IMR-90 (cell line): ENCODE measurements at regions of chr3 and their contacts with region 1.

Region 1: GRCh38 chr3:169863458-169863899 is 6.3 kb downstream of the LRRC31 start:
- DNase-seq: peak; percentile 72
- ATAC-seq: peak; percentile 95
- H3K4me3 ChIP-seq: no peak overlapping the region
- H3K27ac ChIP-seq: no peak overlapping the region
- H3K4me1 ChIP-seq: no peaks in the 10 kb centered on the region
- H3K27me3 ChIP-seq: peaks cover 4% of the 10 kb centered on the region; the same call in 1 of the 2 replicates
- CTCF ChIP-seq: peak; percentile 82
- POLR2A ChIP-seq: no peak
- RAD21 ChIP-seq: peak; percentile 85

Region 2: DNA sequence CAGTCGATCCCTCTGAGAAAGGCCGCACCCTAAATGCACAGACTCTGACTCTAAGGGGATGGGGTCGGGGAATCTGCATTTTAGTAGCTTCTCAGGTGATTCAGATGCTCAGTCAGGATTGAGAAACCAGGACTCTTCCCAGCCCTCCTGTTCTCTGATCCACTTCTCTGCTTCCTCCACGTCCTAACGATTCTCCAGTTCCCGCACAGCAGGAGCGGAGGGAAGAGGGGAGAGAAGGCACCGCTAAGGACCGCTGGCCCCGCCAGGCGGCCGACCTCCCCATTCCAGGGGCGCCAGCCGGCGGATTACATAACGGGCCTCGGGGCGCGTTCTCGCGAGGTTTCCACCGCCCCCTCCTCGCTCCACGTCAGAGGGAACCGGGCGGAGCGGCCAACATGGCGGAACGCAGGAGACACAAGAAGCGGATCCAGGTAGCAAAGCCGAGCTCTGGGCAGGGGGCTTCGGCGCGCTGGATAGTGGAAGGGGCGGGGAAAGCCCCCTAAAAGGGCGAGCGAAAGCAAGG is 103.0 kb after region 1 on chr3 and contains the start of gene SEC62:
- CTCF ChIA-PET with region 1: no interaction called
- POLR2A ChIA-PET with region 1: no interaction called
- dilution Hi-C with region 1: no loop called
- in situ Hi-C with region 1: no loop called
- intact Hi-C with region 1: loop called (anchors 5 kb)
- DNase-seq: peak; percentile 88
- ATAC-seq: peak; percentile 93
- H3K4me3 ChIP-seq: peak within 1 kb of the TSS; percentile 99
- H3K27ac ChIP-seq: peak within 1 kb of the TSS; percentile 89
- H3K4me1 ChIP-seq: peaks cover 2% of the 10 kb centered on the region; the same call in 1 of the 2 replicates
- H3K27me3 ChIP-seq: peaks cover 3% of the 10 kb centered on the region; the same call in 1 of the 2 replicates
- CTCF ChIP-seq: peak; percentile 49
- POLR2A ChIP-seq: peak; percentile 88
- RAD21 ChIP-seq: peak; percentile 43
- total RNA-seq, gene SEC62: 33.2 and 52.2 TPM in 2 replicates

Region 3: GRCh38 chr3:170055209-170055608 is 191.7 kb after region 1 on chr3:
- CTCF ChIA-PET with region 1: no interaction called
- POLR2A ChIA-PET with region 1: no interaction called
- dilution Hi-C with region 1: no loop called
- in situ Hi-C with region 1: loop called (anchors 10 kb)
- intact Hi-C with region 1: loop called (anchors 1 kb)
- DNase-seq: peak; percentile 51
- ATAC-seq: peak; percentile 24
- H3K4me3 ChIP-seq: no peak overlapping the region
- H3K27ac ChIP-seq: no peak overlapping the region
- H3K4me1 ChIP-seq: no peaks in the 10 kb centered on the region
- H3K27me3 ChIP-seq: no peaks in the 10 kb centered on the region
- CTCF ChIP-seq: no peak
- POLR2A ChIP-seq: no peak
- RAD21 ChIP-seq: no peak

Region 4: DNA sequence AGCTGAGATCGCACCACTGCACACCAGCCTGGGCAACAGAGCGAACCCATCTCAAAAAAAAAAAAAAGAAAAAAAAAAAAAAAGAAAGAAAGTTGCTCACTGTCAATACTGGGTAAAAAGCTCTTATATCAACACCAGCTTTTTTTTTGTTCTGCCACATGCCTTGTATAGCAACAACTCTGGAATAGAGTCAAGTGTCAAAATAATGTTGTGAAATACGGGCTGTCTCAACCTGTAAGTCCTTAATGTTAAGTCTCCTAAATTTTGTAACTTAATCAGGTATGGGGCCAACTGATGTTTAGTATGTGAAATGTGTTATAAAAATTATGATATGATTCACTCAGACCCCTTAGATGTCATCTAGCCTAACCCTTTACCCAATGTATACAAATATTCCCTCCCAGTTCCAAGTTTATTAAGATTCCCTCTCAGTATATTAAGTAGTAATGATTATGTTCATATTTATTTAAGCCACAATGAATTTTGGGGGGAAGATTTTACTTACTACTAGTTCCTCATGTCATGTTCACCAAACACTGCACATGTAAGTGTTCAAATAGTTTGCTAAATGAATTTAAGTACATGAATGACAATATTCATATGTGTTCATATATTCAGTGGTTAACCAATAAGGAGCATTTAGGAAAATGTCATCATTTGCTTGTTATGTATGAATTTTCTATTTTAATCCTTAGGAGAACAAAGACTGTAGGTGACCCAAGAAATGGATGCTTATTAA is 226.6 kb after region 1 on chr3:
- CTCF ChIA-PET with region 1: interaction called, 6 read pairs
- POLR2A ChIA-PET with region 1: no interaction called
- dilution Hi-C with region 1: no loop called
- in situ Hi-C with region 1: no loop called
- intact Hi-C with region 1: loop called (anchors 10 kb)
- DNase-seq: no peak
- ATAC-seq: no peak
- H3K4me3 ChIP-seq: no peak overlapping the region
- H3K27ac ChIP-seq: no peak overlapping the region
- H3K4me1 ChIP-seq: no peaks in the 10 kb centered on the region
- H3K27me3 ChIP-seq: no peaks in the 10 kb centered on the region
- CTCF ChIP-seq: no peak
- POLR2A ChIP-seq: no peak
- RAD21 ChIP-seq: no peak